CD4-positive, alpha-beta memory T cell (primary cell): ENCODE measurements at regions of chr14 and their contacts with region 1.

Region 1: GRCh38 chr14:99683619-99684355 is at the start of gene CYP46A1:
- DNase-seq: peak; percentile 98 to 100 (median 99)
- H3K4me3 ChIP-seq: peak within 1 kb of the TSS; percentile 86 to 92
- H3K4me3 Mint-ChIP-seq: peak within 1 kb of the TSS; percentile 86 to 97 (median 94)
- H3K27ac ChIP-seq: peak within 1 kb of the TSS; percentile 71
- H3K27ac Mint-ChIP-seq: peak within 1 kb of the TSS; percentile 92 to 96 (median 93)
- H3K4me1 ChIP-seq: peaks cover 19% of the 10 kb centered on the region
- H3K4me1 Mint-ChIP-seq: peaks cover 4 to 19% (median 12%) of the 10 kb centered on the region in 4 donors
- H3K27me3 ChIP-seq: no peaks in the 10 kb centered on the region
- H3K27me3 Mint-ChIP-seq: peaks cover 3 to 6% of the 10 kb centered on the region in 2 donors
- total RNA-seq, gene CYP46A1: 0.15 to 0.36 TPM

Region 2: GRCh38 chr14:99480917-99481744 is 202.7 kb before region 1 on chr14 and contains the start of gene CCNK:
- CTCF ChIA-PET with region 1: interaction called, 5 read pairs
- POLR2A ChIA-PET with region 1: interaction called, 12 read pairs
- intact Hi-C with region 1: loop called (anchors 1 kb)
- DNase-seq: peak; percentile 100
- H3K4me3 ChIP-seq: peak within 1 kb of the TSS; percentile 88 to 97
- H3K4me3 Mint-ChIP-seq: peak within 1 kb of the TSS; percentile 94 to 99 (median 98)
- H3K27ac ChIP-seq: peak within 1 kb of the TSS; percentile 98
- H3K27ac Mint-ChIP-seq: peak within 1 kb of the TSS; percentile 98 to 99 (median 99)
- H3K4me1 ChIP-seq: peaks cover 68% of the 10 kb centered on the region
- H3K4me1 Mint-ChIP-seq: peaks cover 39 to 80% (median 60%) of the 10 kb centered on the region in 4 donors
- H3K27me3 ChIP-seq: no peaks in the 10 kb centered on the region
- H3K27me3 Mint-ChIP-seq: no peaks in the 10 kb centered on the region
- total RNA-seq, gene CCNK: 77.1 to 83.4 TPM

Region 3: GRCh38 chr14:99518441-99519346 is 165.1 kb before region 1 on chr14:
- CTCF ChIA-PET with region 1: interaction called, 3 read pairs
- POLR2A ChIA-PET with region 1: no interaction called
- intact Hi-C with region 1: loop called (anchors 1 kb)
- DNase-seq: peak; percentile 75 to 83 (median 78)
- H3K4me3 ChIP-seq: no peak overlapping the region
- H3K4me3 Mint-ChIP-seq: no peak overlapping the region
- H3K27ac ChIP-seq: no peak overlapping the region
- H3K27ac Mint-ChIP-seq: peak overlapping the region in 1 of 7 donors; percentile 24
- H3K4me1 ChIP-seq: no peaks in the 10 kb centered on the region
- H3K4me1 Mint-ChIP-seq: no peaks in the 10 kb centered on the region
- H3K27me3 ChIP-seq: no peaks in the 10 kb centered on the region
- H3K27me3 Mint-ChIP-seq: no peaks in the 10 kb centered on the region

Region 4: DNA sequence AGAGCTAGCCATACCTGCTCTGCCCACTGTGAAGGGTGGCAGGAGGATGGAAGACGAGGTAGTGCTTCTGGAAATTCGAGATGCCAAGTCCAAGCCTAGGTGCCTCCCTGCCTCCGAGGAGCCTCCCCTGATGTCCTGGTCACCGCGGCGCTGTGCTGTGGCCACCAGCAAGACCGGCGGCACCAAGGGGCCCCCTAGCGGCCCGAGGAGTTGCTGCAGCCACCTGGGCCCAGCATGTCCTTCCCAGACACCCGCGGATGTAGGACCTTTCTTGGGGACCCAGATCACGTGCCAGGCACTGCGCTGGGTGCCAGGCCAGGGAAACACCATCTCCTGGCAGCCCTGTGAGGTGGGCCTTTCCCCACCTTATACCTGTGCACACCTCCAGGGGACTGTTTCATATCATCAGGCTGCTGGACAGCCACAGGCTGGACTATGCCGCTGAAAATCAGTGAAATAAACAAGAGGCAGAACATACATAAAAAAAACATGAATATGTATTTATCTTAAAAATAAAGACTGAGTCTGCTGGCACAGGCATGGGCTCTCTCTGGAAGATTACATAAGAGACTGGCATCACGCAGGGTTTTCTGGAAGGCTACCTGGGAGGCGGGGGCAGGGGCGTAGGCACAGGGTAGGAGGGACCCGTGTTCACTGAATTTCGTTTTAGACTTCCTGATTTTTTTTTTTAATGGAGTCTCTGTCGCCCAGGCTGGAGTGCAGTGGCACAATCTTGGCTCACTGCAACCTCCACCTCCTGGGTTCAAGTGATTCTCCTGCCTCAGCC is 54.8 kb before region 1 on chr14:
- CTCF ChIA-PET with region 1: no interaction called
- POLR2A ChIA-PET with region 1: no interaction called
- intact Hi-C with region 1: no loop called
- DNase-seq: peak; percentile 46 to 58 (median 53)
- H3K4me3 ChIP-seq: no peak overlapping the region
- H3K4me3 Mint-ChIP-seq: no peak overlapping the region
- H3K27ac ChIP-seq: no peak overlapping the region
- H3K27ac Mint-ChIP-seq: no peak overlapping the region
- H3K4me1 ChIP-seq: peaks cover 3% of the 10 kb centered on the region
- H3K4me1 Mint-ChIP-seq: peaks cover 0 to 5% (median 2%) of the 10 kb centered on the region in 4 donors
- H3K27me3 ChIP-seq: no peaks in the 10 kb centered on the region
- H3K27me3 Mint-ChIP-seq: peaks cover 4 to 22% of the 10 kb centered on the region in 2 donors

Region 5: GRCh38 chr14:99793213-99794150 is 109.7 kb after region 1 on chr14 and contains the start of gene EML1:
- CTCF ChIA-PET with region 1: interaction called, 4 read pairs
- POLR2A ChIA-PET with region 1: no interaction called
- intact Hi-C with region 1: loop called (anchors 2 kb)
- DNase-seq: peak; percentile 55 to 79 (median 75)
- H3K4me3 ChIP-seq: no peak within 1 kb of the TSS
- H3K4me3 Mint-ChIP-seq: peak within 1 kb of the TSS; percentile 69 to 89 (median 80)
- H3K27ac ChIP-seq: no peak within 1 kb of the TSS
- H3K27ac Mint-ChIP-seq: peak within 1 kb of the TSS; percentile 14 to 80 (median 50)
- H3K4me1 ChIP-seq: peaks cover 7% of the 10 kb centered on the region
- H3K4me1 Mint-ChIP-seq: peaks cover 5 to 19% (median 12%) of the 10 kb centered on the region in 4 donors
- H3K27me3 ChIP-seq: peaks cover 11% of the 10 kb centered on the region
- H3K27me3 Mint-ChIP-seq: peaks cover 6 to 7% of the 10 kb centered on the region in 2 donors
- total RNA-seq, gene EML1: 0.22 to 0.23 TPM